ENCODE measurements at regions of chr19 and their contacts with region 1.

Region 1: GRCh38 chr19:55484593-55485438 is at the start of gene NAT14:
- DNase-seq: peak; percentile 48
- ATAC-seq: peak; percentile 38
- H3K4me3 ChIP-seq: peak within 1 kb of the TSS; percentile 80
- H3K27ac ChIP-seq: peak within 1 kb of the TSS; percentile 89
- H3K4me1 ChIP-seq: peaks cover 30% of the 10 kb centered on the region
- H3K27me3 ChIP-seq: no peaks in the 10 kb centered on the region
- CTCF ChIP-seq: no peak
- POLR2A ChIP-seq: peak; percentile 25; the same call in 1 of the 2 replicates
- RAD21 ChIP-seq: no peak
- total RNA-seq, gene NAT14: 4.3 and 7.2 TPM in 2 replicates

Region 2: GRCh38 chr19:55640577-55641425 is 156.0 kb after region 1 on chr19 and contains the start of gene ZNF580:
- CTCF ChIA-PET with region 1: no interaction called
- POLR2A ChIA-PET with region 1: interaction called, 21 read pairs
- dilution Hi-C with region 1: no loop called
- in situ Hi-C with region 1: no loop called
- intact Hi-C with region 1: no loop called
- DNase-seq: peak; percentile 78
- ATAC-seq: peak; percentile 68
- H3K4me3 ChIP-seq: peak within 1 kb of the TSS; percentile 74
- H3K27ac ChIP-seq: peak within 1 kb of the TSS; percentile 76
- H3K4me1 ChIP-seq: peaks cover 19% of the 10 kb centered on the region
- H3K27me3 ChIP-seq: no peaks in the 10 kb centered on the region
- CTCF ChIP-seq: no peak
- POLR2A ChIP-seq: no peak; the same call in 1 of the 2 replicates
- RAD21 ChIP-seq: no peak
- total RNA-seq, gene ZNF580: 1.4 and 1.7 TPM in 2 replicates